ENCODE measurements at regions of chr16 and their contacts with region 1.

Region 1: GRCh38 chr16:2142942-2143877 is 5.2 kb upstream of the RAB26 start:
- DNase-seq: no peak
- H3K4me3 Mint-ChIP-seq: no peak overlapping the region
- H3K27ac Mint-ChIP-seq: no peak overlapping the region
- H3K4me1 Mint-ChIP-seq: peaks cover 5% of the 10 kb centered on the region
- H3K27me3 Mint-ChIP-seq: no peaks in the 10 kb centered on the region

Region 2: GRCh38 chr16:2003827-2004641 is 139.2 kb before region 1 on chr16:
- CTCF ChIA-PET with region 1: interaction called, 31 read pairs
- POLR2A ChIA-PET with region 1: interaction called, 5 read pairs
- DNase-seq: peak; percentile 91
- H3K4me3 Mint-ChIP-seq: no peak overlapping the region
- H3K27ac Mint-ChIP-seq: no peak overlapping the region
- H3K4me1 Mint-ChIP-seq: peaks cover 45% of the 10 kb centered on the region
- H3K27me3 Mint-ChIP-seq: no peaks in the 10 kb centered on the region

Region 3: GRCh38 chr16:2009789-2010510 is 133.3 kb before region 1 on chr16 and contains the start of gene ZNF598:
- CTCF ChIA-PET with region 1: interaction called, 31 read pairs
- POLR2A ChIA-PET with region 1: interaction called, 3 read pairs
- DNase-seq: peak; percentile 83
- H3K4me3 Mint-ChIP-seq: peak within 1 kb of the TSS; percentile 92
- H3K27ac Mint-ChIP-seq: peak within 1 kb of the TSS; percentile 88
- H3K4me1 Mint-ChIP-seq: peaks cover 41% of the 10 kb centered on the region
- H3K27me3 Mint-ChIP-seq: no peaks in the 10 kb centered on the region
- total RNA-seq, gene ZNF598: 52.1 to 53.6 TPM

Region 4: DNA sequence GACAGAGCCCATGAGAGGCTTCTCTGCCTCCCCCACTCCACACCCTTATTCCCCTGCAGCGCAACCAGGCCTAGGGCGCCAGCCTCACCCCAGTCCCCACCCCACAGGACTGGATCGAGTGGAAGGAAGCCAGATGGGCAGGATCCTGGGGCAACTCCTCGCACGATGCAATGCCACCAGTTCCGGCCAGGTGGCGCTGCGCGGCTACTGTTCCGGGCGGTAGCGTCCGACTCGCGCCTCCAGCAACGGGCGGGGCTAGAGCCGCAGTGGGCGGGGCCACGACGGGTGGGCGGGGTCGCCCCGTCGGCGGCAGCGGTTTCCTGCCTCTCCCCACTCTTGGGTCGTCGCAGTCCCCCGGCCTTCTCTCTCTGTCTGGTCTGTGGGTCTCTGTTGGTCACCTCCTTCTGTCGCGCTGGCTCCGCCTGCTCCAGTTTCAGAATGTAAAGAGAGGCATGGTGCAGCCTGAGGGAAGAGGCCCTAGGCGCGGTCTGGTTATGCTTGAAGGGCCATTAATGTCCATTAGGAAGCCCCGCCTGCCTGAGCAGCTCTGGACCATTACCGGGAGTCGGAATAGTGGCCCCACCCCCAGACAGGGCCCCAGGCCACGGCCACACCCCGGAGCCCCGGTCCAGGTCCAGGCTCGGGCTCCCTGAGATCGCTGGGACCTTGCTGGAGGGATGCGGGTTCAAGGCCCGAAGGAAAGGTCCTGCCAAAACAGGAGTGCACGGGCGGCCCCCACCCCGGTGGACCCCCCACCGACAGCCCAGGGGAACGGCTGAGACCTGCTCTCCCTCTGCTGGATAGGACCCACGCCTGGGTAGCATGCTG is 119.9 kb before region 1 on chr16:
- CTCF ChIA-PET with region 1: interaction called, 79 read pairs
- POLR2A ChIA-PET with region 1: interaction called, 3 read pairs
- DNase-seq: peak; percentile 97
- H3K4me3 Mint-ChIP-seq: peak overlapping the region; percentile 64
- H3K27ac Mint-ChIP-seq: peak overlapping the region; percentile 58
- H3K4me1 Mint-ChIP-seq: peaks cover 19% of the 10 kb centered on the region
- H3K27me3 Mint-ChIP-seq: peaks cover 46% of the 10 kb centered on the region

Region 5: GRCh38 chr16:2047330-2048115 is 95.7 kb before region 1 on chr16 and contains the starts of genes NTHL1 and TSC2:
- CTCF ChIA-PET with region 1: interaction called, 10 read pairs
- POLR2A ChIA-PET with region 1: no interaction called
- DNase-seq: peak; percentile 95
- H3K4me3 Mint-ChIP-seq: peak within 1 kb of the TSS; percentile 90
- H3K27ac Mint-ChIP-seq: peak within 1 kb of the TSS; percentile 73
- H3K4me1 Mint-ChIP-seq: peaks cover 21% of the 10 kb centered on the region
- H3K27me3 Mint-ChIP-seq: no peaks in the 10 kb centered on the region
- total RNA-seq, gene NTHL1: 22.5 to 24.5 TPM
- total RNA-seq, gene TSC2: 88.4 to 90.1 TPM

Region 6: GRCh38 chr16:2121853-2122252 is 21.4 kb before region 1 on chr16:
- CTCF ChIA-PET with region 1: interaction called, 14 read pairs
- POLR2A ChIA-PET with region 1: no interaction called
- DNase-seq: no peak
- H3K4me3 Mint-ChIP-seq: no peak overlapping the region
- H3K27ac Mint-ChIP-seq: no peak overlapping the region
- H3K4me1 Mint-ChIP-seq: peaks cover 2% of the 10 kb centered on the region
- H3K27me3 Mint-ChIP-seq: no peaks in the 10 kb centered on the region

Region 7: GRCh38 chr16:2163211-2163881 is 20.1 kb after region 1 on chr16:
- CTCF ChIA-PET with region 1: no interaction called
- POLR2A ChIA-PET with region 1: no interaction called
- DNase-seq: peak; percentile 37
- H3K4me3 Mint-ChIP-seq: no peak overlapping the region
- H3K27ac Mint-ChIP-seq: peak overlapping the region; percentile 56
- H3K4me1 Mint-ChIP-seq: peaks cover 5% of the 10 kb centered on the region
- H3K27me3 Mint-ChIP-seq: no peaks in the 10 kb centered on the region

Measured in activated CD4-positive, alpha-beta memory T cell treated with anti-CD3 and anti-CD28 coated beads, Interleukin-2, amount 10 ng/mL, durations not matched to agents 7 days and 5 days (primary cell).